Activated T-helper 2 cell treated with anti-CD3 and anti-CD28 coated beads, Interferon-gamma antibody, Interleukin-2, Interleukin-4, amounts not matched to agents 10 μg/mL and 5 μg/mL and 100 μg/mL, durations not matched to agents 14 hours and 24 hours and 36 hours (primary cell): ENCODE measurements at regions of chrX and their contacts with region 1.

Region 1: GRCh38 chrX:31136144-31136611 is 64.3 kb upstream of the FTHL17 start:
- DNase-seq: no peak
- H3K4me3 Mint-ChIP-seq: peak overlapping the region; percentile 5
- H3K27ac Mint-ChIP-seq: no peak overlapping the region
- H3K4me1 Mint-ChIP-seq: peaks cover 18% of the 10 kb centered on the region
- H3K27me3 Mint-ChIP-seq: no peaks in the 10 kb centered on the region

Region 2: DNA sequence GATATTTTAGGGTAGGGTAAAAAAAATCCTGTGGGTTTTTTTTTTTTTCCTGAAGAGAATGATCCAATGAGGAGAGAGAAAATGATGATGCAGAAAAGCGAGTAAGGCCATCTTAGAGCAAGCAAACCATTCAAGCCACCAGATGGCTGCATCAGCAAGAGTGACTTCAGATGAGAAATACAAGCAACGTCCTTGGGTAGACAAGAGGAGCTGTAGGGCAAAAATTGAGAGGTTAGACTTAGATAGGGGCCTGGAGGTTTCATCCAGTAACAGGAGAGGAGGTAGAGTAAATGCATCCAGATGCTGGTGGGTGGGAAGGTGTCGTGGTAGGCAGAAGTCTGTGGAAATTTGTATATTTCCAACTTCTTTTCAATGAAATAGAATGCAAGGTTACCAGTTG is 78.9 kb before region 1 on chrX:
- intact Hi-C with region 1: loop called (anchors 2 kb)
- DNase-seq: no peak
- H3K4me3 Mint-ChIP-seq: no peak overlapping the region
- H3K27ac Mint-ChIP-seq: no peak overlapping the region
- H3K4me1 Mint-ChIP-seq: no peaks in the 10 kb centered on the region
- H3K27me3 Mint-ChIP-seq: peaks cover 4% of the 10 kb centered on the region